Colonic mucosa (tissue), 4 donors: ENCODE measurements at regions of chr7 and their contacts with region 1.

Region 1: GRCh38 chr7:124155432-124156022 is 122.7 kb upstream of the TMEM229A start:
- DNase-seq: no peak
- H3K4me3 ChIP-seq: no peak overlapping the region
- H3K27ac ChIP-seq: no peak overlapping the region
- H3K4me1 ChIP-seq: no peaks in the 10 kb centered on the region
- H3K27me3 ChIP-seq: no peaks in the 10 kb centered on the region
- CTCF ChIP-seq: peak; percentile 20

Region 2: GRCh38 chr7:123797673-123798527 is 357.6 kb before region 1 on chr7:
- intact Hi-C with region 1: no loop called
- DNase-seq: no peak
- H3K4me3 ChIP-seq: no peak overlapping the region
- H3K27ac ChIP-seq: peak overlapping the region; percentile 56
- H3K4me1 ChIP-seq: peaks cover 4% of the 10 kb centered on the region
- H3K27me3 ChIP-seq: no peaks in the 10 kb centered on the region
- CTCF ChIP-seq: peak; percentile 52

Region 3: GRCh38 chr7:123823898-123824753 is 331.4 kb before region 1 on chr7:
- intact Hi-C with region 1: no loop called
- DNase-seq: no peak
- H3K4me3 ChIP-seq: no peak overlapping the region
- H3K27ac ChIP-seq: no peak overlapping the region
- H3K4me1 ChIP-seq: no peaks in the 10 kb centered on the region
- H3K27me3 ChIP-seq: no peaks in the 10 kb centered on the region
- CTCF ChIP-seq: no peak

Region 4: DNA sequence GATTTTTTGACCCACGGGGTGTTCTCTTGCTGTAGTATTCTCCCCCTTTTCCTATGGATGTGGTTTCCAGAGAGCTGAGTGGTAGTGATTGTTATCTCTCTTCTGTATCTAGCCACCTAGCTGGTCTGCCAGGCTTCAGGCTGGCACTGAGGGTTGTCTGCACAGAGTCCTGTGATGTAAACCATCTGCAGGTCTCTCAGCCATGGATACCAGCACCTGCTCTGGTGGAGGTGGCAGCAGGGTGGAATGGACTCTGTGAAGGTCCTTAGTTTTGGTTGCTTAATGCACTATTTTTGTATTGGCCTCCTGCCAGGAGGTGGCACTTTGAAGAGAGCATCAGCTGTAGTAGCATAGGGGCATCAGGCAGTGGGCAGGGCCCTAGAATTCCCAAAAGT is 309.7 kb before region 1 on chr7:
- intact Hi-C with region 1: no loop called
- DNase-seq: no peak
- H3K4me3 ChIP-seq: no peak overlapping the region
- H3K27ac ChIP-seq: no peak overlapping the region
- H3K4me1 ChIP-seq: no peaks in the 10 kb centered on the region
- H3K27me3 ChIP-seq: no peaks in the 10 kb centered on the region
- CTCF ChIP-seq: no peak

Region 5: DNA sequence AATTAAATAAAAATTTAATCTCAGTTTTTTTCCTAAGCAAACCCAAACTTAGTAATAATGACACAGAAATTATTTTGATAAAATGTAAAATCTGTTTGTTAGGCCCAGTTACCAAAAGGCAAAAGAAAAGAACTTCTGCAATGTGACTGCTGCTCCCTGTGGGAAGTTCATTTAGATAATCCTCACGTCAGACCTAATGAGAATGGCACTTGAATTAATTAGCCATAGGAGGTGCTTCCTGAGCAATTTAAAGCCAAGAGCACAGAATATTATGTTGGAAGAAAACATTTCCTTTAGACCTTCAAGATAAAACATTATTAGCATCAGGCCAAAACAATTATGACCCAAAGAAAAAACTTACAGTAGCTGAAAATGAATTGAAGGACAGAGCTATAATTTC is 211.1 kb before region 1 on chr7:
- intact Hi-C with region 1: no loop called
- DNase-seq: no peak
- H3K4me3 ChIP-seq: no peak overlapping the region
- H3K27ac ChIP-seq: no peak overlapping the region
- H3K4me1 ChIP-seq: no peaks in the 10 kb centered on the region
- H3K27me3 ChIP-seq: no peaks in the 10 kb centered on the region
- CTCF ChIP-seq: no peak

Region 6: GRCh38 chr7:124784879-124785818 is 629.6 kb after region 1 on chr7:
- intact Hi-C with region 1: loop called (anchors 5 kb)
- DNase-seq: peak; percentile 32
- H3K4me3 ChIP-seq: no peak overlapping the region
- H3K27ac ChIP-seq: no peak overlapping the region
- H3K4me1 ChIP-seq: no peaks in the 10 kb centered on the region
- H3K27me3 ChIP-seq: no peaks in the 10 kb centered on the region
- CTCF ChIP-seq: peak; percentile 62

Region 7: DNA sequence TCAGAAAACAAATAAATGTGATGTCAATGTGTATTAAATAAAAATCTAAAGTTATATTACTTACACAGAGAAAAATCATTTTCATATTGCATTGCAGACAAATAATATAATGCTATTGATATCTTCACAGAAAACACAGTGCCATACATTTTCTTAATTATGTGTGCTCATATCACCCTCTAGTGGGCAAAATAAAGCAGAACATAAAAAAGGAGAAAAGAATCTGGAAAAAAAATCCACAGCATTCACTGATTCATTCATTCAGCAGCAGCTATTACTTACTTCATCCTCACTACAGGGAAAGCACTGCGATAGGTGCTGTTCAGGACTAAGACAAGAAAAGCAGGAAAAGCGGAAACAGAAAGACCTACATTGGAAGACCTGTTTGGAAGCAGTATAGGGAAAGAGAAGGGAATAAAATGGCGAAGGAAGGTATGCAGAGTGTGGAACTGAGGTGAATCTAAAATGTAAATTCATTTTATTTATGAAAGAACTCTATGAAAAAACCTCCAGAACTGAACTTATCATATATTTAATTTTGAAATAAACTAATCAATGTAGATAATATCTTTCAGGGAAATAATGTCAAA is 700.9 kb after region 1 on chr7:
- intact Hi-C with region 1: loop called (anchors 5 kb)
- DNase-seq: no peak
- H3K4me3 ChIP-seq: no peak overlapping the region
- H3K27ac ChIP-seq: no peak overlapping the region
- H3K4me1 ChIP-seq: no peaks in the 10 kb centered on the region
- H3K27me3 ChIP-seq: no peaks in the 10 kb centered on the region
- CTCF ChIP-seq: peak; percentile 51